ENCODE measurements at regions of chr19 and their contacts with region 1.

Region 1: DNA sequence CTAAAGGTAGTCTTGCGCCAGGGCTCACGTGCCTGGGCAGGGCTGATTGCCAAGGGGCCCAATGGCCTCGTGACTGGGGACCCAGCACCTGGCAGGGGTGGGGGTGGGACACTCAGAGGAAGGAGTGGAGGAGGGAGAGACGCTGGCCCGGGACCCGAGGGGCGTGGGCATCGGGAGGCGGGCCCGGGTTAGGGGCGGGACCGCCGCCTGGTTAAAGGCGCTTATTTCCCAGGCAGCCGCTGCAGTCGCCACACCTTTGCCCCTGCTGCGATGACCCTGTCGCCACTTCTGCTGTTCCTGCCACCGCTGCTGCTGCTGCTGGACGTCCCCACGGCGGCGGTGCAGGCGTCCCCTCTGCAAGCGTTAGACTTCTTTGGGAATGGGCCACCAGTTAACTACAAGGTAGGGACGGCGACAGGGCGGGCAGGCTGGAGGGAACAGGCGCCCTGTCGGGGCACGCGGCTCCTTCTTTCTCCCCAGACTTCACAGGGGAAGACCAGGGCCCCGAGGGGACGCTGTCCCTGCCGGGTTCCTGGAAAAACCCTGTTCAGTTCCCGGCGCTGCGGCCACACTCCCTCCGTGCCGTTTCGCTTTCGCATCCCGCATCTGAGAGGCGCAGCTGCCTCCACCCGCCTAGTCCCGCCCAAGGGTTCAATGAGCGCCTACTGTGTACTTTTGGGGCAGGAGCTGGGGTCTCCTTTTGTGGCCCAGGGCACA is at the start of gene IFI30:
- DNase-seq: no peak
- ATAC-seq: peak; percentile 89
- H3K4me3 ChIP-seq: peak within 1 kb of the TSS; percentile 85
- H3K27ac ChIP-seq: no peak within 1 kb of the TSS
- H3K4me1 ChIP-seq: peaks cover 3% of the 10 kb centered on the region; the same call in 1 of the 2 replicates
- H3K27me3 ChIP-seq: peaks cover 4% of the 10 kb centered on the region; the same call in 1 of the 2 replicates
- CTCF ChIP-seq: no peak
- POLR2A ChIP-seq: no peak
- RAD21 ChIP-seq: no peak
- total RNA-seq, gene IFI30: 1.1 and 2.3 TPM in 2 replicates

Region 2: GRCh38 chr19:18007044-18007916 is 166.4 kb before region 1 on chr19:
- CTCF ChIA-PET with region 1: no interaction called
- POLR2A ChIA-PET with region 1: no interaction called
- dilution Hi-C with region 1: no loop called
- in situ Hi-C with region 1: no loop called
- intact Hi-C with region 1: loop called (anchors 5 kb)
- DNase-seq: peak; percentile 62
- ATAC-seq: peak; percentile 84
- H3K4me3 ChIP-seq: peak overlapping the region; percentile 41
- H3K27ac ChIP-seq: no peak overlapping the region
- H3K4me1 ChIP-seq: peaks cover 8% of the 10 kb centered on the region
- H3K27me3 ChIP-seq: no peaks in the 10 kb centered on the region
- CTCF ChIP-seq: peak; percentile 99
- POLR2A ChIP-seq: peak; percentile 54; the same call in 1 of the 2 replicates
- RAD21 ChIP-seq: peak; percentile 99

Region 3: GRCh38 chr19:18251587-18252369 is 78.0 kb after region 1 on chr19:
- CTCF ChIA-PET with region 1: no interaction called
- POLR2A ChIA-PET with region 1: no interaction called
- dilution Hi-C with region 1: no loop called
- in situ Hi-C with region 1: no loop called
- intact Hi-C with region 1: loop called (anchors 5 kb)
- DNase-seq: peak; percentile 63
- ATAC-seq: peak; percentile 94
- H3K4me3 ChIP-seq: no peak overlapping the region
- H3K27ac ChIP-seq: no peak overlapping the region
- H3K4me1 ChIP-seq: no peaks in the 10 kb centered on the region
- H3K27me3 ChIP-seq: peaks cover 22% of the 10 kb centered on the region
- CTCF ChIP-seq: peak; percentile 93
- POLR2A ChIP-seq: 0 out of 2 replicates have a peak, but pooled peaks have one; percentile 48
- RAD21 ChIP-seq: peak; percentile 98

Region 4: GRCh38 chr19:18291590-18292461 is 118.1 kb after region 1 on chr19:
- CTCF ChIA-PET with region 1: no interaction called
- POLR2A ChIA-PET with region 1: no interaction called
- dilution Hi-C with region 1: no loop called
- in situ Hi-C with region 1: no loop called
- intact Hi-C with region 1: no loop called
- DNase-seq: peak; percentile 75
- ATAC-seq: peak; percentile 76
- H3K4me3 ChIP-seq: peak overlapping the region; percentile 49
- H3K27ac ChIP-seq: peak overlapping the region; percentile 92
- H3K4me1 ChIP-seq: peaks cover 23% of the 10 kb centered on the region
- H3K27me3 ChIP-seq: no peaks in the 10 kb centered on the region
- CTCF ChIP-seq: no peak
- POLR2A ChIP-seq: peak; percentile 64
- RAD21 ChIP-seq: no peak

Region 5: GRCh38 chr19:19531951-19532805 is 1358.4 kb after region 1 on chr19:
- CTCF ChIA-PET with region 1: no interaction called
- POLR2A ChIA-PET with region 1: no interaction called
- dilution Hi-C with region 1: no loop called
- in situ Hi-C with region 1: no loop called
- intact Hi-C with region 1: no loop called
- DNase-seq: peak; percentile 44
- ATAC-seq: peak; percentile 81
- H3K4me3 ChIP-seq: no peak overlapping the region
- H3K27ac ChIP-seq: no peak overlapping the region
- H3K4me1 ChIP-seq: peaks cover 5% of the 10 kb centered on the region
- H3K27me3 ChIP-seq: no peaks in the 10 kb centered on the region
- CTCF ChIP-seq: peak; percentile 96
- POLR2A ChIP-seq: peak; percentile 59; the same call in 1 of the 2 replicates
- RAD21 ChIP-seq: peak; percentile 95